HEK293T (cell line): ENCODE measurements at regions of chr7 and their contacts with region 1.

Region 1: GRCh38 chr7:51251300-51251699 is 65.3 kb downstream of the COBL start:
- DNase-seq: no peak

Region 2: GRCh38 chr7:51214098-51214497 is 37.2 kb before region 1 on chr7:
- CTCF ChIA-PET with region 1: interaction called, 10 read pairs
- POLR2A ChIA-PET with region 1: no interaction called
- DNase-seq: no peak

Region 3: GRCh38 chr7:51593628-51594027 is 342.3 kb after region 1 on chr7:
- CTCF ChIA-PET with region 1: no interaction called
- POLR2A ChIA-PET with region 1: no interaction called
- DNase-seq: no peak